ENCODE measurements at regions of chr3 and their contacts with region 1.

Region 1: DNA sequence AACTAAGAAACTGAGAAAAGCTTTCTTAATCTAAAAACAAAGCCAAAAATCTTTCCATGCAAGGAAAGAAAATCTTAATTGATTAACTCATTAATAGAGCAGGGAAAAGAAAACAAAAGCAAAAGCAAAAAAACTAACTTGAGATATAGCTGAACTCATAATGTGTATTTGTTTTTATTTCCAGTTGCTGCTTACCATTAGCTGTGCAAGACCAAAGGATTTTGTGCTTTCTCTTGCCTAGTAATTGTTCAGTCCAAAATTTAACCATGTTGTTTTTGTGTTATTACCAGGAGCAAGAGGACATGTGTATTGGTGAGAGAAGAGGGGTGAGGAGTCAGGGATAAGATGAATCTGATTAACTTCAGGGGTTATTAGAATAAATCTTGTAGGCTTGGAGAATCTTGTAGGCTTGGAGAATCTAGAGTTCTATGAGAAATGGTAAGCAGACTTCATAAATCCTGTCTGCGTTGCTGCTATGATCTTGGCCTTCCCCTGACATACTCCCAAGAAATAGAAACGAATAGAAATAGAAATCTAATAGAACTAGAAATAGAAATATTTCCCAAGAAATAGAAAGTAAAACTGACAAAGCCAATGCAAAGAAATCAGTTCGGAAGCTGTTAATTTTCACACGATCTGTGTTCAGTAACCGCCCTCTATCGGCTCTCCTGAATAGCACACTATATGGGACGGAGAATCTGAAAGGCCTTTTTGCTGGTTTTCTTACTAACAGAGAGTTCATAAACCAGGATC is 72.6 kb upstream of the TNFSF10 start:
- DNase-seq: peak; percentile 77
- ATAC-seq: peak; percentile 93
- H3K4me3 ChIP-seq: peak overlapping the region; percentile 55
- H3K27ac ChIP-seq: no peak overlapping the region
- H3K4me1 ChIP-seq: no peaks in the 10 kb centered on the region
- H3K27me3 ChIP-seq: no peaks in the 10 kb centered on the region
- CTCF ChIP-seq: peak; percentile 95

Region 2: DNA sequence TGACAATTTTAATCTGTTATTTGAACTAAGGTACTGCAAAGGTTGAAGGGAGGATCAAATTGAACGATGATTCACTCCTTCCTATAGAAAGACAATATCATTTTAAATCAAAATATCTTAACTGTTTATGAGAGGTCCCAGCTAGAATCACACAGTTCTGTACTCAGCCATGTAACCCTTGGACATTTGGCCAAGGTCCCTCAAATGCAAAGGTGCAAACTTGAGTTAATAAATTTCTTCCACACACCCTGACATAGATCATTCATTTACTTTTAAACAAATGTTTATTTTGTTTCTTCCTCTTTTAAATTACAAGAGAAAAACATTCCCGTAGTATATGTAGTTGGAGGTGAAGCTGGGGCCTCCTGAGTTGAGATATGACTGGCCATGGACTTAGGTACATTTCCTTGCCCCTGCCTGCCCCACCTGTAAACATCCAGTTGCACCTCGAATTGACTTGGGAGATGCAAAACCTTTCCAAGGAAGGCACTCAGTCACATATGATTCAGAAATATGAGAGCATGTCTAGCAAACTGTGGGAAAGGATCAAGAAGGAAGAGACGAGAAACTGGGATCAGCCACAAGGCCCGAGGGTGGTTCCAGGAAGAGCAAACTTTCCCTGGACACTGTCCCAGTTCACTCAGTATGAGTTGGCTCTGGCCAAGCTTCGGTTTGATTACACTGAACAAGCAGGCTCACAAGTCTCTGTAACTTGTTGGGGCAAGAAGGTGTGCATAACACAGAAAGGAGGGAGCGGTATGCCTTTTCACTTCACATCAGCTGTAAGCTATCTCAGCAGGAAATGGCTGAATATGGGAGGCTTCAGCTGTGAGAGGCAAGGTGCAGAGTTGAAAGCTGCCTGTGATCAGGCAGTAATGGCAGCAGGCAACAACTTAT is 79.3 kb before region 1 on chr3:
- CTCF ChIA-PET with region 1: no interaction called
- POLR2A ChIA-PET with region 1: no interaction called
- intact Hi-C with region 1: loop called (anchors 1 kb)
- DNase-seq: peak; percentile 95
- ATAC-seq: peak; percentile 99
- H3K4me3 ChIP-seq: peak overlapping the region; percentile 33; the same call in 1 of the 2 replicates
- H3K27ac ChIP-seq: peak overlapping the region; percentile 80
- H3K4me1 ChIP-seq: peaks cover 20% of the 10 kb centered on the region
- H3K27me3 ChIP-seq: no peaks in the 10 kb centered on the region
- CTCF ChIP-seq: no peak

Region 3: GRCh38 chr3:172530566-172530965 is 65.3 kb before region 1 on chr3:
- CTCF ChIA-PET with region 1: no interaction called
- POLR2A ChIA-PET with region 1: interaction called, 14 read pairs
- intact Hi-C with region 1: no loop called
- DNase-seq: no peak
- ATAC-seq: no peak
- H3K4me3 ChIP-seq: no peak overlapping the region
- H3K27ac ChIP-seq: no peak overlapping the region
- H3K4me1 ChIP-seq: no peaks in the 10 kb centered on the region
- H3K27me3 ChIP-seq: no peaks in the 10 kb centered on the region
- CTCF ChIP-seq: no peak

Region 4: DNA sequence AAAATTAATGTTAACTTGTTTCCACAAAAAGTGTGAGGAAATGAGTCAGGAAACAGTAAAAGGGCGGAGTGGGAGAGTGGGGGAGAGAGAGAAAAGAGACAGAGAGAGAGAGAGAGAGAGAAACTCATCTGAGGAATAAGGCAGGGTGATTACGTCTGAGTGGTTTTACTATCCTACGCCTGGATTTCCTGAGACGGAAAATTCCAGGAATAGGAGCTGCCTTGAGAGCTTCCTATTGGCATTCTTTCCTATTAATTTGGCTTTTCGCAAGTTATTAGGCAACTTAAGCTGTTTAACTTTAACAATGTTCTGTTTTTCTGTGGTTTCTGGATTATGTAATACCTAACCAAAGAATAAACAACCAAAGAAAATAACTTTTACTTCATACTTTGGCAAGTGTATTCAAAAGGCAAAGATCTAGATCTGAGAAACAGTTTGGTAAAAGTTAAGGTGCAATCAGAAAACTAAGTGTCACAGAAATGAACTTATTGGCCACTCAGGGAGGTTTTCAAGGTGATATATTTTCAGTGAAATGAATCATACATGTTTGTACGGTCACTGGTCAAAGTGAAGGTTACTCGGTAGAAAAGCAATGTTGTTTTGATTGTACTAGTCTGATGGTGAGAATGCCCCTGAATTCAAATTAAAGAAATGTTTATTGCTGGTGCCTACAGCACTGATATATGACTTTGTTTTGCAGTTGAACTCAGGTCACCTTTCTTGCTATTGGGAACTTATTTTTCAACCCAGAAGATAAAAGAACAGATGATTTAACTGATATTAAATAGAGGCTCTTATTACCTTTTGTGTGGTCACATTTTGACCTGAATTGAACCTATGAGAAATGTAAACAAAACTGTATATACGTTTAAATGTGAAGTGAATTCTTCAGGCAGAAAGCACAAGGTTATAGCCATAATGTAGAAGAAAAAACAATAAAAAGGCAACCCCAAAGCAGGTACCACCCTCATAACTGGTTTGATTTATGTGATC is 32.6 kb before region 1 on chr3:
- CTCF ChIA-PET with region 1: no interaction called
- POLR2A ChIA-PET with region 1: no interaction called
- intact Hi-C with region 1: loop called (anchors 1 kb)
- DNase-seq: peak; percentile 62
- ATAC-seq: peak; percentile 59
- H3K4me3 ChIP-seq: peak overlapping the region; percentile 40
- H3K27ac ChIP-seq: peak overlapping the region; percentile 91
- H3K4me1 ChIP-seq: peaks cover 44% of the 10 kb centered on the region
- H3K27me3 ChIP-seq: no peaks in the 10 kb centered on the region
- CTCF ChIP-seq: no peak

Region 5: DNA sequence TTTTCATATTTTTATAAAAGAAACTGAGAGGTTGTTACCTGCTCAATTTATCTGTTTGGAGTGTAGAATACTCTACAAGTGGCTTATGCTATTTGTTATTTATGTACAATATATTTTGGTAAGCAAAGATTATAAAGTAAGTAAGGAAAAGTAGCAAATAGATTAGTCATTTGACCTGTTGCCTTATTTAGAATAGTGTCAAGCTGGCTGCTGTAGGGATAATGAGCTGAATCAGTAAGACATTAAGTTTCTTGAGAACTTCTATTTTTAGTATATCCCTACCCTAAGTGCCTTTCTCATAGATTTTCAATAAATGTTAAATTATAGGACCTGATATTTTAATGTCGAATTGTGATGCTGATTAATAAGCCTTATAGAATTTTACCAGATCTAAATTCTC is 191.9 kb after region 1 on chr3:
- CTCF ChIA-PET with region 1: no interaction called
- POLR2A ChIA-PET with region 1: no interaction called
- intact Hi-C with region 1: no loop called
- DNase-seq: no peak
- ATAC-seq: no peak
- H3K4me3 ChIP-seq: no peak overlapping the region
- H3K27ac ChIP-seq: no peak overlapping the region
- H3K4me1 ChIP-seq: no peaks in the 10 kb centered on the region
- H3K27me3 ChIP-seq: no peaks in the 10 kb centered on the region
- CTCF ChIP-seq: no peak